Pancreas (tissue), 10 donors: ENCODE measurements at regions of chr17 and their contacts with region 1.

Region 1: GRCh38 chr17:32769839-32770238 is 107.1 kb downstream of the MYO1D start:
- DNase-seq: no peak
- ATAC-seq: peak; percentile 74 to 87 (median 80)
- H3K4me3 ChIP-seq: no peak overlapping the region
- H3K27ac ChIP-seq: no peak overlapping the region
- H3K4me1 ChIP-seq: peaks cover 0 to 4% (median 0%) of the 10 kb centered on the region in 3 donors
- H3K27me3 ChIP-seq: no peaks in the 10 kb centered on the region
- CTCF ChIP-seq: no peak

Region 2: DNA sequence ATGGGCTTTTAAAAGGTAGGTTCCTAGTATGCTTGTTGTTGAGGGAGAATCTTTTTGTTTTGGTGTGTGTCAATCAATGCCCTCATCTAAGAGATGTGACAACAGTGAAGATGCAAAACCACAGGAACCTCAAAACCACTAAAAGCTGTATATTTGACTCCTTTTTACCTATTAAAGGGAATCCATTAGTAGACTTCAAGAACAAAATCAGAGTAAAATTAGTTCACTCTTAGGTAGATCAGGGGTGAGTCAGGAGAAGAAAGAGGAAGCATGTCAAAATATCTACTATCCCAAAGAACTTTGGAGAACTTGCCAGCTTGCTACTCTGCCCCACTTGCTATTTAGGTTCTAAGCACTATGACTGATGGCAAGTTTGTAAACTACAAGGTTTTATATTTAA is 194.0 kb before region 1 on chr17:
- intact Hi-C with region 1: no loop called
- DNase-seq: no peak
- ATAC-seq: no peak
- H3K4me3 ChIP-seq: no peak overlapping the region
- H3K27ac ChIP-seq: no peak overlapping the region
- H3K4me1 ChIP-seq: no peaks in the 10 kb centered on the region
- H3K27me3 ChIP-seq: no peaks in the 10 kb centered on the region
- CTCF ChIP-seq: no peak

Region 3: DNA sequence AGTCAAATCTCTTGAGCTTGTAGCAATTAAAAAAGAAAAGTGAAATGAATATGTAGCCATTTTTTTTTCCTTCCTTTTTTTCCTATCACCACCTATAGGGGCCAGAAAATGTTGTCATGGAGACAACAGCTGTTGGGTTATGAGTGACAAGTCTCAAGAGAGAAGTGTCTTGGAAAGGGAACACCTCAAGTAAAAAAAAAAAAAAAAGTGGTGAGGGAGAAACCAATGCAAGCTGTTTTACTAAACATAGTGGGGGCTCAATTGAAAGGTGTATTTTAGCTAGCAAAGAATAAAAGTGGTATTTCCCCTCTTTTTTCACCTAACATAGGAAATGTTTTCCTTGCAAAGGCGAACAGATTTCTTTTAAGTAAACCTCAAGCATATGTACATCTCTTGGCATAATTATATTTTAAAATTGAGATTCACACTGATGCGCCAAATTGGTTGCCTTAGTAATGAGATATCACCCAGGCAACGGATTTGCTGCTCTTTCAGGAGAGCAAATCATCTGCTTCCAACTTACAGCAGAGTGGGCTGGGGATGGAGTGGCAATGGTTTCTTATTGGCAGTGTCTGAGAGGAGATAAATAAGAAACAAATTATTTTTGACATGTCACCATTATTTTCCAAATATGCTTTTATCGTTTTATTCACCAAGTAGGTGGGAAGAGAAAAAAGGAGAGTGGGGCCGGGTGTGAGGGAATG is 76.5 kb before region 1 on chr17:
- intact Hi-C with region 1: no loop called
- DNase-seq: no peak
- ATAC-seq: no peak
- H3K4me3 ChIP-seq: no peak overlapping the region
- H3K27ac ChIP-seq: no peak overlapping the region
- H3K4me1 ChIP-seq: no peaks in the 10 kb centered on the region
- H3K27me3 ChIP-seq: no peaks in the 10 kb centered on the region
- CTCF ChIP-seq: no peak

Region 4: DNA sequence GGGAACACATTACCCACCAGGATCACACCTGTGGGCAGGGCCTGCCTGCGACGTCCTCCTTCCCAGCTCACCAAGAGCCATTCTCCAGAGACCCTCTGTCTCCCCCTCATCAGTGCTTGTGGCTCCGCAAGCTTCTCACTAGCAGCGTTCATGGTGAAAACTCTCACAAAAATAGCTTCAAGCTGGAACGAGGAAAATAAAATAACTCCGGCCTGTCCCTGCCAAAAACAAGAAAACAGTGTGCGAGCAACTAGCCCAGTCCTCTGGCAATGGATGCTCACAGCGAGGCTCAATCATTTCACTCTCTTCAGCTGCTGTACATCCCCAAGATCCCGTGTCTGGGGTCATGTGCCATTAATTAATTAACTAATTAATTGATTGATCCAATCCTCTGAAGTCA is 239.8 kb after region 1 on chr17:
- intact Hi-C with region 1: loop called in 1 of 3 experiments (anchors 10 kb)
- DNase-seq: no peak
- ATAC-seq: no peak
- H3K4me3 ChIP-seq: no peak overlapping the region
- H3K27ac ChIP-seq: no peak overlapping the region
- H3K4me1 ChIP-seq: no peaks in the 10 kb centered on the region
- H3K27me3 ChIP-seq: no peaks in the 10 kb centered on the region
- CTCF ChIP-seq: no peak